Activated CD4-positive, alpha-beta memory T cell treated with anti-CD3 and anti-CD28 coated beads for 36 hours (primary cell): ENCODE measurements at regions of chr17 and their contacts with region 1.

Region 1: DNA sequence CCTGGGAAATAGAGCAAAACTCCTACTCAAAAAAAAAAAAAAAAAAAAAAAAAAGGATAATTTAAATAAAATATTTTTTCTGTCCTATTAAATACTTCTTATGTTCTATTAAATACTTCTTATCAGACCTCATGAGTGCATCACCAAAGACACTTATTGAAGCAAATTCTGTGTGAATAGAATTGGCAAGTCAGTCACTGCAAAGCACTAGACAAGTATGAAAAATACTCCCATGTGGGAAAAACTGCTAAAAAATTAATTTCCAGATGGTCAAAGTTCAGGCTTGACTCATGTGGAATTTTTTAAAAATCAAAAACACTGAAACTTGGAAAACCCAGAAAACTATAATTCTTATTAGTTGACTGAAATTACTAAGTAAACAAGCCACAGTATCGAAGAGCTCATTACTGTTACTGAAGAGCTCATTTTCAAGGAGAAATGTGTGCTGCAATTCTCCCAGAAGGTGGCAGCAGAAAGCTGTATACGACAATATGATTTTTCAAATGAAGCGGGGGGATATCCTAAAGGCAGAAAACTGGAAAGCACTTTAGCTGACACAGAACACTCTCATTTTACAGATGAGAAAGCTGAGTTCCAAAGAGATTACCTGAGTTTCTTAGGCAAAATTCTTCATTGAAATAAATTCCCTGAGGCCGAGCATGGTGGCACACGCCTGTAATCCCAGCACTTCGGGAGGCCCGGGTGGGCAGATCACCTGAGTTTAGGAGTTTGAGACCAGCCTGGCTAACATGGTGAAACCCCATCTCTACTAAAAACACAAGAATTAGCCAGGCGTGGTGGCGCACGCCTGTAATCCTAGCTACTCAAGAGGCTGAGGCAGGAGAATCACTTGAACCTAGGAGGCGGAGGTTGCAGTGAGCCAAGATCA is 15.9 kb upstream of the FBXO47 start:
- DNase-seq: peak; percentile 50
- H3K4me3 Mint-ChIP-seq: no peak overlapping the region
- H3K27ac Mint-ChIP-seq: peak overlapping the region; percentile 11
- H3K4me1 Mint-ChIP-seq: peaks cover 3% of the 10 kb centered on the region
- H3K27me3 Mint-ChIP-seq: peaks cover 1% of the 10 kb centered on the region

Region 2: DNA sequence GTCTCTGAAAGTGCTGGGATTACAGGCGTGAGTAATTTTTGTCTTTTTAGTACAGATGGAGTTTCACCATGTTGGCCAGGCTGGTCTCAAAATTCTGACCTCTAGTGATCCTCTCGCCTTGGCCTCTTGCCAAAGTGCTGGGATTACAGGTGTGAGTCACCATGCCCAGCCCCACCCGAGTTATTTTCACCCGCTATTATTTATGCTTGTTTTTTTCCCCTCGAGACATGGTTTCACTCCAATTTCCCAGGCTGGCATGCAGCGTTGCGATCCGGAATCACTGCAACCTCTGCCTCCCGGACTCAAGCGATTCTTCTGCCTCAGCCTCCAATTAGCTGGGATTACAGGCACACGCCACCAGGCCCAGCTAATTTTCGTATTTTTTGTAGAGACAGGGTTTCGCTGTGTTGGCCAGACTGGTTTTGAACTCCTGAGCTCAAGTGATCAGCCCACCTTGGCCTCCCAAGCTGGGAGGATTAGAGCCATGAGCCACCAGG is 138.8 kb before region 1 on chr17:
- CTCF ChIA-PET with region 1: no interaction called
- POLR2A ChIA-PET with region 1: no interaction called
- intact Hi-C with region 1: no loop called
- DNase-seq: no peak
- H3K4me3 Mint-ChIP-seq: no peak overlapping the region
- H3K27ac Mint-ChIP-seq: no peak overlapping the region
- H3K4me1 Mint-ChIP-seq: peaks cover 6% of the 10 kb centered on the region
- H3K27me3 Mint-ChIP-seq: no peaks in the 10 kb centered on the region

Region 3: DNA sequence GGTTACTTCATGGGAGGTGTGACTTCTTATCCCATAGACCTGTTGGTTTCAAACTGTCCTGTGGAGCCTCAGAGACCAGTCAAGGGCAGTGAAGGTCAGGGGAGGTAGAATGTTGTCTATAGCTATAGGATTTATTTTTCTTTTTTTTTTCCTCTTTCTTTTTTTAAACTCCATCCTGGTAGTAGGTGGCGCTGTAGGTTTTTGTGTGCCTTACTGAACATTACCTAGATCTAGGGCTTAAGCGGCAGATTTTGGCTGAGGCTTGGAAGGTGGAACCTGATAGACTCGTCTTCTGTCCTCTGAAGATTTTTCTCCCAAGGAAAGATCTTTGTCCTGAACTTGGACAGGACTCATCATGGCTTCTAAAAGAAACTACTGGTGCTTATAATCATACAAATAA is 65.8 kb before region 1 on chr17:
- CTCF ChIA-PET with region 1: no interaction called
- POLR2A ChIA-PET with region 1: no interaction called
- intact Hi-C with region 1: no loop called
- DNase-seq: peak; percentile 2
- H3K4me3 Mint-ChIP-seq: no peak overlapping the region
- H3K27ac Mint-ChIP-seq: no peak overlapping the region
- H3K4me1 Mint-ChIP-seq: peaks cover 11% of the 10 kb centered on the region
- H3K27me3 Mint-ChIP-seq: no peaks in the 10 kb centered on the region

Region 4: DNA sequence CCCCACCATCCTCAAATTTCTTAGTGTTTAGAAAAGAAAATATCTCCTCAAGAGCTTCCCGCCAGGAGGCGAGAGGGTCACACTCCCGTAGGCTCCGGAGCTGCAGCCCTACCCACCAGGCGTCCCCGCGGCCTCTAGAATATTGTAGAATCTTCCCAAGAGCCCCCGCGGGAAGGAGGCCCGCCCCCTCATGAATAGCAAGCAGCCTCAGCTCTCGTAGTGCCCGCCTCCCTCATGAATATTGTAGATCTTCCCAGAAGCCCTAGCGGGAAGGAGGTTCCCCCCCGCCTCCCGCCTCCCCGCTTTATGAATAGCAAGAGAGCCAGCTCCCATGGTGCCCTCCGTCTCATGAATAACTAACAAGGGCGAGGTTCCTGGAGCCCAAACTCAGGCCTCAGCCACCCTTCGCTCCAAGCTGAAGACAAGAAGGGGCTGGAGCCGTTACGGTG is 15.8 kb before region 1 on chr17 and contains the start of gene FBXO47:
- CTCF ChIA-PET with region 1: interaction called, 17 read pairs
- POLR2A ChIA-PET with region 1: no interaction called
- intact Hi-C with region 1: no loop called
- DNase-seq: peak; percentile 91
- H3K4me3 Mint-ChIP-seq: peak within 1 kb of the TSS; percentile 73
- H3K27ac Mint-ChIP-seq: peak within 1 kb of the TSS; percentile 77
- H3K4me1 Mint-ChIP-seq: peaks cover 13% of the 10 kb centered on the region
- H3K27me3 Mint-ChIP-seq: no peaks in the 10 kb centered on the region
- total RNA-seq, gene FBXO47: not detected

Region 5: DNA sequence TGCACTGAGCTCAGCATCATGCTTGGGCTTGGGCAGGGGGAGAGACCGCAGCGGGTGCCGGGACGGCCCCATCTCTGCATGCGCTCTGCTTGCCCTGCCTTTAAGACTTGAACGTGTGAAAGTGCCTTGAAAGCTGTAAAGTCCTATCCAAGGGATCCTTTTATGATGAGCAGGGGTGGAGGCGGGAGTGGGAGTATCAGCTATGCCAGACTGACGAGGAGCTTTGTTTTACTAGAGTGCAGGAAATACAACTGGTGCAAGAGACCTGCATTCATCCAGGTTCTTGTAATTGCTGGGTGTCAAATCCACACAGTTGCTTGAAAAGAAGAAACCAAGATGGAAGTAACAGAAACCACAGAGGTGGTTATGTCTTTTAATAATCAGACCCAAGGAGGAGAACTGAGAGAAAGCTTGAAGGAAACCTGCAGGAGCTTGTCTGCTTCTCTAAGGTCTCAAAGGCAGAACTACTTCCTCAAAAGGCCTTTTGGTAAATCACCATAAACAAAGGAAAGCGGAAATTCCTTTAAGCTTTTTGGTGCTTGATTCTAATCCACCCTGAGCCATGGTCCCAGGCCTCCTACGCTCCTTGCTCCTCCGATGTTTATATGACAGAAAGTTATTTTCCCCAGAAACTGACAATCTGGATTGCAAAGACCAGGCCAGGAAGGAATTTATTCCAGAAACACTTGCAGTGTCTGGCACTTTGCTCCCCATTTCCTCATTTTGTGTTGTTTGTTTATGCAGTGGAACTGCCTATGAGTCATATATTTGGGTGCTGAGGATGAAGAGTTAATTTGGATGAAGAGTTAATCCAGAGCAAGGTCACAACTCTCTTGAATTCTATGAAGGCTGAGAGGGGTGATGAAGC is 35.4 kb after region 1 on chr17:
- CTCF ChIA-PET with region 1: interaction called, 16 read pairs
- POLR2A ChIA-PET with region 1: no interaction called
- intact Hi-C with region 1: no loop called
- DNase-seq: peak; percentile 56
- H3K4me3 Mint-ChIP-seq: no peak overlapping the region
- H3K27ac Mint-ChIP-seq: no peak overlapping the region
- H3K4me1 Mint-ChIP-seq: peaks cover 30% of the 10 kb centered on the region
- H3K27me3 Mint-ChIP-seq: no peaks in the 10 kb centered on the region

Region 6: DNA sequence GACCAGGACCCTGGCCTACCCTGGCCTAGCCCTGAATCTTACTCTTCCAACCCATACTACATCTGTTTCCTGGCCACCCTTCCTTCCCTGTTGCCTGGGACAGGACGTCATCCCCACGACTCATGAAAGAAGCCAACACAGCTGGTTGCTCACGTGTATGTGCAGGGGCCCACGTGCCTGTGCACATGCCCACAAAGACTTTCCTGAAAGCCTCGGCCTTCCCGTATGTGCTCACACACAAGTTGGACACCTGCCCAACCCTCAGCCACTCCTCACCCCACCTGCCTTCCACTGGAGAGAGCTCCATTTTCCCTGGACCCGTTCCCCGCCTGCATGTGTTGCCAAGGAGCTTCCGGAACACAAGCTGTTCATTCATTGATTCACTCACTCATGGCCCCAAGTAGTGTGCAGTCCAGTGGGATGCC is 161.3 kb after region 1 on chr17:
- CTCF ChIA-PET with region 1: interaction called, 227 read pairs
- POLR2A ChIA-PET with region 1: no interaction called
- intact Hi-C with region 1: no loop called
- DNase-seq: no peak
- H3K4me3 Mint-ChIP-seq: no peak overlapping the region
- H3K27ac Mint-ChIP-seq: no peak overlapping the region
- H3K4me1 Mint-ChIP-seq: no peaks in the 10 kb centered on the region
- H3K27me3 Mint-ChIP-seq: no peaks in the 10 kb centered on the region

Region 7: GRCh38 chr17:39174907-39175694 is 192.0 kb after region 1 on chr17:
- CTCF ChIA-PET with region 1: interaction called, 68 read pairs
- POLR2A ChIA-PET with region 1: no interaction called
- intact Hi-C with region 1: loop called (anchors 1 kb)
- DNase-seq: peak; percentile 80
- H3K4me3 Mint-ChIP-seq: no peak overlapping the region
- H3K27ac Mint-ChIP-seq: no peak overlapping the region
- H3K4me1 Mint-ChIP-seq: no peaks in the 10 kb centered on the region
- H3K27me3 Mint-ChIP-seq: no peaks in the 10 kb centered on the region

Region 8: GRCh38 chr17:39244600-39245570 is 261.8 kb after region 1 on chr17:
- CTCF ChIA-PET with region 1: interaction called, 47 read pairs
- POLR2A ChIA-PET with region 1: no interaction called
- intact Hi-C with region 1: no loop called
- DNase-seq: peak; percentile 91
- H3K4me3 Mint-ChIP-seq: no peak overlapping the region
- H3K27ac Mint-ChIP-seq: no peak overlapping the region
- H3K4me1 Mint-ChIP-seq: peaks cover 5% of the 10 kb centered on the region
- H3K27me3 Mint-ChIP-seq: no peaks in the 10 kb centered on the region